ENCODE measurements at regions of chr5 and their contacts with region 1.

Region 1: DNA sequence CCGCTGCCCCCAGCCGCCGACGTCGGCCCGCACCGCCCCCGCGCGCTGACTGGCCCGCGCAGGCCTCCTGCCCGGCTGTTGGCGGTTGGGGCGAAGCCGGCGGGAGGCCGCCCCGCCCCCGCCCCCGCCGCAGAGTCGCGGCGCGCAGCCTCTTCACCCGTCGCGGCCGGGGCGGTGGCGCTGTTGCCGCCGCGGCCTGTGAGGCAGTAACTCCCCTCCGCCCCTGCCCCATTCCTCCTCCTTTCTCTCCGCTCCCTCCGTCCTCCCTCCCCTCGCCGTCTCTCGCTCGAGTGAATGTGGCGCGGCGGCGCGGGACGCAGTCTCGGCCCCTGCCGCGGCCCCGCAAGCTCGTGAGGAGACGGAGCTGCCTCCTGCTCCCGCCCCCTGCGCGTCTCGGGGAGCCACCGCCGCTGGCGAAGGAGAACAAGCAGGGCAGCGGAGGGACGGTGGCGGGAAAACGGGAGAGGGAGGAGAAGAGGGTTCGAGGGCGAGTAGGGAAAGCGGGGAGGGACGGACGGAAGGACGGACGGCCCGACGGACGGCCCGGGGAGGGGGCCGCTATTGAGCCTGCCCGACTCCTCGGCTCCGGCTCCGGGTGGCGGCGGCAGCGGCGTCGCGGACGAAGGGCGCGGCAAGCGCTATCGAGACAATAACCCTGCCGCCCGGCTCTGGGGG is 637 bp upstream of the ERBIN start:
- DNase-seq: peak; percentile 67 to 89
- H3K4me3 ChIP-seq: peak overlapping the region; percentile 99
- H3K27ac ChIP-seq: peak overlapping the region; percentile 97
- H3K4me1 ChIP-seq: peaks cover 31% of the 10 kb centered on the region
- H3K27me3 ChIP-seq: no peaks in the 10 kb centered on the region
- CTCF ChIP-seq: no peak; the same call in 1 of the 2 replicates

Region 2: DNA sequence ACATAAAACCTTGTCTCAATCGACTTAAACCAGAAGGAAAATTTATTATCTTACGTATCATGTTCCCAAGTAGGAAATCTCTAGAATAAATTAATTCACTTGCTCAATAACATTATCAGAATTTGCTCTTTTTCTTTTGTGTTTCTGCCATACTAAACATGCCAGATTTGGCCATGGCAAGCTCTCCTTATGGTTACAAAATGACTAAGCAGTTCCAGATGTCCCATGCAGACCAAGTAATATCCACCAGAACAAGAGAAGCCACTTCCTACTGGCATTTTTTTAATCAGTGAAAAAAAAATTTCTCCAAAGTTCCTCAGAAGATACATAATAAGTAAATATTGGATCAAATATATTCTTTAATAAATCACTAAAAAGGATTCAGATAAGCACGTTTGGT is 418.8 kb before region 1 on chr5:
- CTCF ChIA-PET with region 1: no interaction called
- POLR2A ChIA-PET with region 1: no interaction called
- intact Hi-C with region 1: no loop called
- DNase-seq: no peak
- H3K4me3 ChIP-seq: no peak overlapping the region
- H3K27ac ChIP-seq: no peak overlapping the region
- H3K4me1 ChIP-seq: no peaks in the 10 kb centered on the region
- H3K27me3 ChIP-seq: no peaks in the 10 kb centered on the region
- CTCF ChIP-seq: no peak

Region 3: DNA sequence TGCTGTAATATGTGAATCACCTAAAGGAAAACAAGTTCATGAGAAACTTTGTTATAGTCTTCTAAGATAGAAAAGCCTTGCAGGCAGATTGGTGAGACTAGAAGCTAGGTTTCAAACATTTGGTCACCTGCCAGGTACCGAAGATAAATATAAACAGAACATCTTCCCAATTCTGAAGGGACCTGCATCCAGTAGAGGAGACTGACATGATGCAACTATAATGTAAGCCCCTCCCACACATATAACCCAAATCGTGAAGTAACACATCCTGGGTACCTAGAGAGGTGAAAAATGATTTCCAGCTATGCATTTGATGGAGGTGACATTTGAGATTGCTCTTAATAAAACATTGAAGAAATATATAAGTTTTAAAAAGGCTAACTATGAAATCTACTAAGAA is 271.0 kb before region 1 on chr5:
- CTCF ChIA-PET with region 1: no interaction called
- POLR2A ChIA-PET with region 1: no interaction called
- intact Hi-C with region 1: no loop called
- DNase-seq: no peak
- H3K4me3 ChIP-seq: no peak overlapping the region
- H3K27ac ChIP-seq: no peak overlapping the region
- H3K4me1 ChIP-seq: no peaks in the 10 kb centered on the region
- H3K27me3 ChIP-seq: no peaks in the 10 kb centered on the region
- CTCF ChIP-seq: no peak

Region 4: DNA sequence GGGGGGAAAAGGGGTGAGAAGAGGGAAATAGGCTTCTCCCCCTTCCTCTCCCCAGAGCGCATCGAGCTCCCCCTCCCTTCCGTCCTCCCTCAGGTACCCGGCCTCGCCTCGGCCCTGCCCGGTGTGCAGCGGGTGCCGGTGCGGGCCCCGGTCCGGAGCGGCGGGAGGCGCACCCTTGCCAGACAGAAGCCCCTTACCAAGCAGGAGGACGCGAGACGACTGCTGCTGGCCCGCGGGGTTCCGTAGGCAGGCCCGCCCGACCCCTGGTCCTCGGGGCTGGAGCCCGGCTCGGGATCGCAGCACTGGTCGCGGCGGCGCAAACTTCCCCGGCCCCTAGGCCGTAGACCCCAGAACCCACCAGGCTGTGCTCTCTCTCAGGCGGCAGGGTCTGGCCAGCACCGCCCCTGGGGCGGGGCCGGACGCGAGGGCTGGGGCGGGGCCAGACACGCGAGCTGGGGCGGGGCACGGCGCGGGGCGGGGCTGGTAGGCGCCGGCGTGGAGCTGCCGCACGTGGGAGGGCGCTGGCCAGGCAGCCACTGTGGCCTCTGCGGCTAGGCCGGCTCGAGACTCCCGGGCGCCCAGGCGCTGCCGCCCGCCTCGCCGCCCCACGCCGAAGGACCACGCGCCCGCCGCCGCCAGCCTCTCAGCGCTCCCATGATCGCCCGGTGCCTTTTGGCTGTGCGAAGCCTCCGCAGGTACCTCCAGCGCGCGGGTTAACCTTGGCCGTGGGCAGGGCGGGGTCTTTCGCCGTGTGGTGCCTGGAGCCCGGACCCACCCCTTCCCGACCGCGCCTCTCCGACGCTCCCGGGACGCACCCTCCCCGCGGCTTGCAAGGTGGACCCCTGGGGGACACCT is 203.8 kb before region 1 on chr5 and contains the starts of genes NLN and SGTB:
- CTCF ChIA-PET with region 1: interaction called, 4 read pairs
- POLR2A ChIA-PET with region 1: no interaction called
- intact Hi-C with region 1: loop called (anchors 5 kb)
- DNase-seq: peak; percentile 44 to 86
- H3K4me3 ChIP-seq: peak within 1 kb of the TSS; percentile 61
- H3K27ac ChIP-seq: peak within 1 kb of the TSS; percentile 48
- H3K4me1 ChIP-seq: peaks cover 26% of the 10 kb centered on the region
- H3K27me3 ChIP-seq: no peaks in the 10 kb centered on the region
- CTCF ChIP-seq: no peak
- total RNA-seq, gene NLN: 56.7 and 74.7 TPM in 2 replicates
- total RNA-seq, gene SGTB: 8.8 and 9.8 TPM in 2 replicates

Region 5: GRCh38 chr5:65760504-65761275 is 165.0 kb before region 1 on chr5:
- CTCF ChIA-PET with region 1: interaction called, 4 read pairs
- POLR2A ChIA-PET with region 1: no interaction called
- intact Hi-C with region 1: loop called (anchors 2 kb)
- DNase-seq: peak; percentile 36 to 41
- H3K4me3 ChIP-seq: no peak overlapping the region
- H3K27ac ChIP-seq: no peak overlapping the region
- H3K4me1 ChIP-seq: no peaks in the 10 kb centered on the region
- H3K27me3 ChIP-seq: no peaks in the 10 kb centered on the region
- CTCF ChIP-seq: no peak; the same call in 1 of the 2 replicates

Region 6: DNA sequence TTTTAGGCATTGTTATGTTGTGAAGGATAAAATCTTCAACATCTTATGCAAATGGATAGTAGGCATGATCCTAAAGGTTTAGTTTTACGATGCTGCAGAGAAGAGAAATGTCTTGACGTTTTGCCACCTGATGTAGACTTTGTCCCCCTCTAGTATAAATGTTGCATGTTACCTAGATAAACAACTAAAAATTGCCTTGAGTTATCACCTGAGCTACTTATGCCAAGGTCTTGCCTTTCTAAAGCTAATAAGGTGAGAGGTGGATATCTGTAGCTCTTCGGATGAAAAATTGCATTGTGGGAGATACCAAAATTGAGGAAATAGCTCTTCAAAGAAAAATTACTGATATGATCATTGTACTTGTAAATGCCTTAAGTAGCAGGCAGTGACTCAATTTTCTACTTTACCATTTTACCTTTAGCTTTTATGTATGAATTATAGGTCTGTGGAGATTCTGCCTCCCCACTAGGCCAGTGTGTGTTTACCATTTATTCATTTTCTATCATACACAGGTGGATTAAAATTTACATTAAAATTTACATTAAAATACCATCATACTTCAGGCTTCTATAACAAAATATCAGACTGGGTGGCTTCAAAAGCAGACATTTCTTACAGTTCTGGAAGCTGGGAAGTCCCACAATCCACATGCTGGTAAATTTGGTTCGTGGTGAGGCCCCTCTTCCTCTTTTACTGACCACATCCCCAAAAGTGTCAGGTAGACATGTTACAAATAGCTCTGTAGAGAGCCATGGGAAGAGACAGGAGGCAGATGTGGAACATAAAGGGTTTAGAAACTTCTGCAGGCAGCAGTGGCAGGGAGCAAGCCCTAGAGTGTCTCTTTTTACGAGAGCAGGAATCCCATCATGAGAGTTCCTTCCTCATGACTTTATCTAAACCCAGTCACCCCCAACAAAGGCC is 100.1 kb before region 1 on chr5:
- CTCF ChIA-PET with region 1: no interaction called
- POLR2A ChIA-PET with region 1: interaction called, 15 read pairs
- intact Hi-C with region 1: no loop called
- DNase-seq: no peak
- H3K4me3 ChIP-seq: no peak overlapping the region
- H3K27ac ChIP-seq: peak overlapping the region; percentile 15; the same call in 1 of the 2 replicates
- H3K4me1 ChIP-seq: peaks cover 32% of the 10 kb centered on the region
- H3K27me3 ChIP-seq: no peaks in the 10 kb centered on the region
- CTCF ChIP-seq: no peak

Region 7: DNA sequence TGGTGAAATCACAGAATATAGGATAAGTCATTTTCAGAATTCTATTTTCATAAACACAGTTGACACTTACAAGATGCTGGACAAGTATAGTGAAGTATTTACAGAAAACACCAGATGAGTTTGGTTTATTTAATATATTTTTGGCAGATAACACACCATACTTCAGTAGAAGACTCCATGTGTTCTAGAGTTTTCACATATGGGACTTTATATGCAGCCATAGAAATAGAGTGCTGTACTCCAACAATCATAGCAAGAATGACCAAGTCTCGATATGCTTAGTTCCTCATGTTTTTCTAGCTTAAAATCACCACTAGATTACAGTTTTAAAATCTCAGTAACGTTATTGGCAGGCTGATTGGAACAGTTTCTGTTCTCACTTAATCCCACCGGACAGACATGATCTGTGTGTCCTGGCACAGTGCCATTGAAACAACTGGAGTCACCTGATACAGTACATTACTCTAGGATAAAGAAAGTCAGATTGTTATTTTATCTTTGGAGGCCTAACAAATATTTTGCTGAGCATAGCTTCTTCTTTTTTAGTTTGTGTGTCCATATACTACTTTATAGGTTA is 45.2 kb before region 1 on chr5:
- CTCF ChIA-PET with region 1: no interaction called
- POLR2A ChIA-PET with region 1: interaction called, 10 read pairs
- intact Hi-C with region 1: loop called (anchors 1 kb)
- DNase-seq: no peak
- H3K4me3 ChIP-seq: no peak overlapping the region
- H3K27ac ChIP-seq: no peak overlapping the region; the same call in 1 of the 2 replicates
- H3K4me1 ChIP-seq: peaks cover 20% of the 10 kb centered on the region
- H3K27me3 ChIP-seq: no peaks in the 10 kb centered on the region
- CTCF ChIP-seq: no peak

Region 8: GRCh38 chr5:66002415-66002814 is 76.7 kb after region 1 on chr5:
- CTCF ChIA-PET with region 1: no interaction called
- POLR2A ChIA-PET with region 1: no interaction called
- intact Hi-C with region 1: no loop called
- DNase-seq: no peak
- H3K4me3 ChIP-seq: no peak overlapping the region
- H3K27ac ChIP-seq: no peak overlapping the region
- H3K4me1 ChIP-seq: no peaks in the 10 kb centered on the region
- H3K27me3 ChIP-seq: no peaks in the 10 kb centered on the region
- CTCF ChIP-seq: no peak

Region 9: DNA sequence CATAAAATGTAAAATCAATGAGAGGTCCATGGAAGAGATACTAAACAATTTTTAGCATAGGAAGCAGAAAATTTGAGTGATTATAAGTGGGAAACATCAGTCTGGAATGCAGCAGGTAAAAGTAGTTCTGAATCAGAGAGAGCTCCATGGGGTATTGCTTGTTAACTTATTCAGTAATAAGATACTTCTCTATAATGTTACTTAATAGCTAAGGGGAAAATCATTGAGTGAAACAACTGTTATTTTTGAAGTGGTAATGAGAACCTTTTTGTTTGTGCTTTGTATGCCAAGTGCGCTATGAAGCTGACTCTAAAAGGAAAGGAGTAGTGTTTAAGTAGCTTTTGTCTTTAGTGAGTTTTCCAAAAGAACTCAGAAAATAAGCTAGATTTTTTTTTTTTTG is 95.8 kb after region 1 on chr5:
- CTCF ChIA-PET with region 1: no interaction called
- POLR2A ChIA-PET with region 1: interaction called, 12 read pairs
- intact Hi-C with region 1: no loop called
- DNase-seq: no peak
- H3K4me3 ChIP-seq: no peak overlapping the region
- H3K27ac ChIP-seq: no peak overlapping the region
- H3K4me1 ChIP-seq: no peaks in the 10 kb centered on the region
- H3K27me3 ChIP-seq: no peaks in the 10 kb centered on the region
- CTCF ChIP-seq: no peak

Region 10: GRCh38 chr5:66057239-66057638 is 131.5 kb after region 1 on chr5:
- CTCF ChIA-PET with region 1: no interaction called
- POLR2A ChIA-PET with region 1: no interaction called
- intact Hi-C with region 1: no loop called
- DNase-seq: no peak
- H3K4me3 ChIP-seq: no peak overlapping the region
- H3K27ac ChIP-seq: no peak overlapping the region
- H3K4me1 ChIP-seq: no peaks in the 10 kb centered on the region
- H3K27me3 ChIP-seq: no peaks in the 10 kb centered on the region
- CTCF ChIP-seq: no peak

Measured in PC-9 (cell line).